CD4-positive, alpha-beta T cell (primary cell): ENCODE measurements at regions of chr17 and their contacts with region 1.

Region 1: DNA sequence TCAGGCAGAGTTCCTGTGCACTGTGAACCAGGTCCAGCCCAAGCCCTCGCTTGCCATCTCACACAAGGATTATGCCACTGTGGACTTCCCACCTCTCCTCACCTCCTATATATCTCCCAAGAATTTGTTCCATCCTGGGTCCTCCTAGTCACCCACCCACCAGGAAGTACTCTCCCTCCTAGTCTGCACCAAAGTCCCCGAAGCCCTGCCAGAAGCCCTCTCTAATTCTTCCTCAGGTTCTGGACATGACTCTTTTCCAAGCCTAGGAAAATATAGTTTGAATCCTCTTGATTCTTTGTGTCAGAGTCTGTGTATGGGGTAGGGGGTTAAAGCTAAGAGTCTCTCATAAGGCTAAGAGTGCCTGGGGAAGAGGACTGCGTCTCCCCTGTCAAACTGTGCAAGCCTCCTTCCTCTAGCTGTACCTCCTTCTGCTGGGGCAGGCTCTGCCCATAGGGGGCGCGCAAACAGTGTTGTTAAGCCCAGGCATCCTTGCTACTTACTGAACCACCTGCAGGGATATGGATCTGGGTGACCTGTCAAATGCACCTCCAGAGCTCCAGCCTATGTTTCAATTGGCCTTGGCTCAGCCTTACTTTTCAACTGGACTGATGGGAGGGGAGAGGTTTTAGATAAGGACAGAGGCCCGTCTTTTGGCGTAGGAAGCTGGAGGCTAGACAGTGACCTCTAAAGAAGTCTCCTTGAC is 16.6 kb upstream of the DLX4 start:
- DNase-seq: peak; percentile 72 to 88 (median 80)
- ATAC-seq: peak; percentile 98
- H3K4me3 ChIP-seq: no peak overlapping the region
- H3K4me3 Mint-ChIP-seq: no peak overlapping the region
- H3K27ac ChIP-seq: no peak overlapping the region
- H3K27ac Mint-ChIP-seq: no peak overlapping the region
- H3K4me1 ChIP-seq: no peaks in the 10 kb centered on the region
- H3K4me1 Mint-ChIP-seq: no peaks in the 10 kb centered on the region
- H3K27me3 ChIP-seq: peaks cover 32 to 34% of the 10 kb centered on the region in 2 experiments
- H3K27me3 Mint-ChIP-seq: peaks cover 74% of the 10 kb centered on the region
- CTCF ChIP-seq: peak; percentile 89

Region 2: DNA sequence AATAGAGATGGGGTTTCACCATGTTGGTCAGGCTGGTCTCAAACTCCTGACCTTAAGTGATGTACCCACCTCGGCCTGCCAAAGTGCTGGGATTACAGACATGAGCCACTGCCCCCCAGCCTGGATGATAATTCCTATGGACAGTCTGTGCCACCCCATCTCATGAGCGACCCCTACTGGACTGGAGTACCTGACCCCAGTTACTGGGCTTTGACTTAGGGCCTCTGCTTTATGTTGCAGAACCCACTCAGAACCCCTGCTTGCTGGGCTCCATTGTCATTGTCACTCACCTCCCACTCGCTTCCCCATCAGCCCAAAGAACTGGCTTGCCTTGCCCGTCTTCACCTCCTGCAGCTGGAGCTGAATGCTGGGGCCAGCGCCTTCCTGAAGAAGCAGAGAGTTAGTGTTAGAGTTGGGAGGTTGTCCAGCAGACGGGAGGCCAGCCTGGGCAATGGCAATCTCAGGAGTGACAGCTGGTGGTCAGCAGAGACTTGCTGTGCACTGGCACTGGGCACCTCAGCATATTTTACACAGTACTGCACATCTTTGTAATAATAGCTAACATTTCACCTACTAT is 108.5 kb before region 1 on chr17:
- CTCF ChIA-PET with region 1: no interaction called
- POLR2A ChIA-PET with region 1: no interaction called
- intact Hi-C with region 1: no loop called
- DNase-seq: peak in 4 of 14 experiments; percentile 36 to 48 (median 41)
- ATAC-seq: no peak
- H3K4me3 ChIP-seq: no peak overlapping the region
- H3K4me3 Mint-ChIP-seq: no peak overlapping the region
- H3K27ac ChIP-seq: no peak overlapping the region
- H3K27ac Mint-ChIP-seq: peak overlapping the region; percentile 65
- H3K4me1 ChIP-seq: peaks cover 12% of the 10 kb centered on the region
- H3K4me1 Mint-ChIP-seq: peaks cover 19% of the 10 kb centered on the region
- H3K27me3 ChIP-seq: no peaks in the 10 kb centered on the region
- H3K27me3 Mint-ChIP-seq: no peaks in the 10 kb centered on the region
- CTCF ChIP-seq: no peak

Region 3: GRCh38 chr17:49861150-49861892 is 91.0 kb before region 1 on chr17:
- CTCF ChIA-PET with region 1: no interaction called
- POLR2A ChIA-PET with region 1: no interaction called
- intact Hi-C with region 1: loop called in 1 of 2 experiments (anchors 5 kb)
- DNase-seq: peak; percentile 28 to 83 (median 43)
- ATAC-seq: peak; percentile 80
- H3K4me3 ChIP-seq: no peak overlapping the region
- H3K4me3 Mint-ChIP-seq: no peak overlapping the region
- H3K27ac ChIP-seq: no peak overlapping the region
- H3K27ac Mint-ChIP-seq: no peak overlapping the region
- H3K4me1 ChIP-seq: peaks cover 6% of the 10 kb centered on the region
- H3K4me1 Mint-ChIP-seq: no peaks in the 10 kb centered on the region
- H3K27me3 ChIP-seq: peaks cover 0 to 10% of the 10 kb centered on the region in 2 experiments
- H3K27me3 Mint-ChIP-seq: peaks cover 6% of the 10 kb centered on the region
- CTCF ChIP-seq: peak; percentile 93

Region 4: GRCh38 chr17:49880291-49881053 is 71.9 kb before region 1 on chr17:
- CTCF ChIA-PET with region 1: interaction called, 4 read pairs
- POLR2A ChIA-PET with region 1: no interaction called
- intact Hi-C with region 1: loop called in 1 of 2 experiments (anchors 5 kb)
- DNase-seq: peak; percentile 36 to 82 (median 64)
- ATAC-seq: peak; percentile 99
- H3K4me3 ChIP-seq: peak overlapping the region; percentile 16
- H3K4me3 Mint-ChIP-seq: no peak overlapping the region
- H3K27ac ChIP-seq: no peak overlapping the region
- H3K27ac Mint-ChIP-seq: no peak overlapping the region
- H3K4me1 ChIP-seq: peaks cover 9% of the 10 kb centered on the region
- H3K4me1 Mint-ChIP-seq: peaks cover 6% of the 10 kb centered on the region
- H3K27me3 ChIP-seq: peaks cover 42 to 43% of the 10 kb centered on the region in 2 experiments
- H3K27me3 Mint-ChIP-seq: peaks cover 57% of the 10 kb centered on the region
- CTCF ChIP-seq: peak; percentile 97